Transverse colon (tissue), 4 donors: ENCODE measurements at regions of chr1 and their contacts with region 1.

Region 1: GRCh38 chr1:209937996-209938959 is at the start of gene SYT14:
- DNase-seq: no peak
- H3K4me3 ChIP-seq: peak within 1 kb of the TSS in 2 of 4 donors; percentile 14 to 33
- H3K27ac ChIP-seq: no peak within 1 kb of the TSS
- H3K4me1 ChIP-seq: peaks cover 0 to 3% (median 0%) of the 10 kb centered on the region in 4 donors
- H3K27me3 ChIP-seq: peaks cover 56% of the 10 kb centered on the region
- CTCF ChIP-seq: no peak
- EP300 ChIP-seq: no peak
- POLR2A ChIP-seq: no peak
- total RNA-seq, gene SYT14: under 0.01 TPM in 1 of 4 donors, not detected in the others

Region 2: DNA sequence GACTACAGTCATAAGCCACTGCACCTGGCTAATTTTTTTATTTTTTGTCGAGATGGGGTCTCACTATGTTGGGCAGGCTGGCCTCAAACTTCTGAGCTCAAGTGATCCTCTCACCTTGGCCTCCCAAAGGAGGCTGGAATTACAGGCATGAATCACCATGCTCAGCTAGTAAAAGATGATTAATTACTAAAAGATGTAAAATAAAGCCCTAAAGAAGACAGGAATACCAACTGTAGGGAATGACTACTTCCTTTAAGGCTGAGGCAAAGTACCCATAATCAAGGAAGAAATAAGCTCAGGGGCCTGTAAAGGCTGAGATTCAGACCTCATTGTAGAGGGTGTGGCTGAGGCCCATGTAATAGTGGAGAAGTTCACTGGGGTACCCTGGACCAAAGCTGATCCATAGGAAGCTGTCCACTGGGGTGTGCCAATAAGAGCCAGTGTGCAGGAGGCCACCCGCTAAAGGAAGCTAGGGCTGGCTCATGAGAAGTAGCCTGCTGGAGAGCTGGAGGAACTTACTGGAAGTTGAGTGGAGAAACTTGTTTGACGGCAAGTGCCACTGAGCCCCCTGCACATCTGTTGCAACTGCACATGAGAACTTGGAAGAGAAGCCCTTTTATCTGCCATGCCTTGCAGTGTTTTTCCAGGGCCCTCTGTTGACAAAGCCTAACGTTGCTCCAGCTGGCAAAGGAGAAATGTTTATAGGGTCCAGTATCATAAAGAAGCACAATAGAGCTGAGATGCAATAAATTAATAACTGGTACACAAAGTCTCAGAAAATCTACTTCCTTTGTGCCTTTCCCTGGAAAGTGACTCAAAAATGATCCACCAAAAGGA is 276.5 kb after region 1 on chr1:
- in situ Hi-C with region 1: no loop called
- intact Hi-C with region 1: loop called (anchors 5 kb)
- DNase-seq: peak; percentile 15
- H3K4me3 ChIP-seq: no peak overlapping the region
- H3K27ac ChIP-seq: peak overlapping the region in 1 of 4 donors; percentile 25
- H3K4me1 ChIP-seq: peaks cover 0 to 5% (median 2%) of the 10 kb centered on the region in 4 donors
- H3K27me3 ChIP-seq: no peaks in the 10 kb centered on the region
- CTCF ChIP-seq: peak in 1 of 5 experiments; percentile 12
- EP300 ChIP-seq: no peak
- POLR2A ChIP-seq: no peak